ENCODE measurements at regions of chr1 and their contacts with region 1.

Region 1: DNA sequence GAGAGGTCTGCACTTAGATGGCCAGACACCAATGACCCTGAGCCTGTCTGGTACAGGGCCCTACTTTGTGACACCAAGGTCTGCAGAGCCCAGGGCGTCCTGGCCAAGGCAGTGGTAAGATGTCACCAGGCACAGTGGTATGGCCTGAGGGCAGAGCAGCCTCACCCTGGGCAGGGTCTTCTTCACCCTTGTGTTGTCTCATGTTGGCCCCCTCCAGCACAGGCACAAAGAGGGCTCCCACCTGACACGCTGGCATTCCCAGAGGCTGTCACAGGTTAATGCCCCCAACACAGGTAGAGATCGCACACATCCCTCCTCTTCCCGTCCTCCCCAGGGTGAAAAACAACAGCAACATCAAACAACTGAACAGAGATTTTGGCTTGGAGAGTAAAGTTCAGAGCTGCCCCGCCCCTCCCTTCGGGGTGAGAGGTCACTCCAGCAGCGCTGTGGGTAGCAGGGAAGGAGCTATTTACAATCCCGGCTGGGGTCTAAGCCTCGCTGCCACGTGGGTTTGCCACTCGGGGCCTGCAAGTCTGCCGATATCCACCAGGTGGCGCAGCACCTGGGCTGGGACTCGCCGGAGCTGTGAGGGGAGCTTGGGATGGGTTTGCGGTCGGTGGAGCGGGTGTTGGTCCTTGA is 12.6 kb downstream of the EFNA3 start:
- DNase-seq: peak; percentile 84
- ATAC-seq: peak; percentile 80
- H3K4me3 Mint-ChIP-seq: no peak overlapping the region
- H3K27ac Mint-ChIP-seq: no peak overlapping the region
- H3K4me1 Mint-ChIP-seq: peaks cover 7% of the 10 kb centered on the region
- H3K27me3 Mint-ChIP-seq: peaks cover 17% of the 10 kb centered on the region

Region 2: DNA sequence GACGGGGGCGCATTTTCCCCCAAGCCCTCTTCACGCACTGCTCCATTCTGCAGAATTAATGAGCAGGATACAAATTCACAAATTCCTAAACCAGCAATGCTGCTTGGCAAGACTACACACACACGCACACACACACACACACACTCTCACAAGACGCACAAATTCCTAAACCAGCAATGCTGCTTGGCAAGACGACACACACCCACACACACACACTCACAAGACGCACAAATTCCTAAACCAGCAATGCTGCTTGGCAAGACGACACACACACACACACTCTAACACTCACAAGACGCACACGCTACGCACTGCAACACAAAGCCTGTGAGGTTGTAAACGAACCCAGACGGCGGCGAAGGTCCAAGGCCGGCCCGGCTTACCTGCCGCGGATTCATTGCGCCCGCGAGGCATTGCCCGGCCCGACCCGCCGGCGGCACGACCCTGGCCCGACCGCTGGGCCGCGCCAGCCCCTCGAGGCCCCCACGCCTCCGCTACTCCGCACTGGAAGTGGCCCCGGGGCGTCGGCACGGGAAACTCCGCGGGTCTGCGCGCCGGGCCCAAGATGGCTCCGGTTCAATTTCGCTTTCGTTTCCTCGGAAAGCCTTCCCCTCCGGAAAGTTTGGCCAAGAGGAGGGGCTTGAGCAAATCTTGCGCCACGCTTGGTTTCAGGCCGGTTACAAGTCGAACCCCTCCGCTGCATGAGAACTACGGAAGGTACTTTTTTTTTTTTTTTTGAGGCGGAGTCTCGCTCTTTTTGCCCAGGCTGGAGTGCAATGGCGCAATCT is 483.4 kb before region 1 on chr1 and contains the start of gene ADAR:
- CTCF ChIA-PET with region 1: no interaction called
- DNase-seq: peak; percentile 97
- ATAC-seq: peak; percentile 86
- H3K4me3 Mint-ChIP-seq: peak within 1 kb of the TSS; percentile 92
- H3K27ac Mint-ChIP-seq: peak within 1 kb of the TSS; percentile 98
- H3K4me1 Mint-ChIP-seq: peaks cover 73% of the 10 kb centered on the region
- H3K27me3 Mint-ChIP-seq: no peaks in the 10 kb centered on the region
- total RNA-seq, gene ADAR: 369 to 434 TPM

Region 3: GRCh38 chr1:154990276-154990675 is 100.9 kb before region 1 on chr1:
- CTCF ChIA-PET with region 1: no interaction called
- DNase-seq: no peak
- ATAC-seq: no peak
- H3K4me3 Mint-ChIP-seq: no peak overlapping the region
- H3K27ac Mint-ChIP-seq: no peak overlapping the region
- H3K4me1 Mint-ChIP-seq: peaks cover 13% of the 10 kb centered on the region
- H3K27me3 Mint-ChIP-seq: no peaks in the 10 kb centered on the region

Region 4: DNA sequence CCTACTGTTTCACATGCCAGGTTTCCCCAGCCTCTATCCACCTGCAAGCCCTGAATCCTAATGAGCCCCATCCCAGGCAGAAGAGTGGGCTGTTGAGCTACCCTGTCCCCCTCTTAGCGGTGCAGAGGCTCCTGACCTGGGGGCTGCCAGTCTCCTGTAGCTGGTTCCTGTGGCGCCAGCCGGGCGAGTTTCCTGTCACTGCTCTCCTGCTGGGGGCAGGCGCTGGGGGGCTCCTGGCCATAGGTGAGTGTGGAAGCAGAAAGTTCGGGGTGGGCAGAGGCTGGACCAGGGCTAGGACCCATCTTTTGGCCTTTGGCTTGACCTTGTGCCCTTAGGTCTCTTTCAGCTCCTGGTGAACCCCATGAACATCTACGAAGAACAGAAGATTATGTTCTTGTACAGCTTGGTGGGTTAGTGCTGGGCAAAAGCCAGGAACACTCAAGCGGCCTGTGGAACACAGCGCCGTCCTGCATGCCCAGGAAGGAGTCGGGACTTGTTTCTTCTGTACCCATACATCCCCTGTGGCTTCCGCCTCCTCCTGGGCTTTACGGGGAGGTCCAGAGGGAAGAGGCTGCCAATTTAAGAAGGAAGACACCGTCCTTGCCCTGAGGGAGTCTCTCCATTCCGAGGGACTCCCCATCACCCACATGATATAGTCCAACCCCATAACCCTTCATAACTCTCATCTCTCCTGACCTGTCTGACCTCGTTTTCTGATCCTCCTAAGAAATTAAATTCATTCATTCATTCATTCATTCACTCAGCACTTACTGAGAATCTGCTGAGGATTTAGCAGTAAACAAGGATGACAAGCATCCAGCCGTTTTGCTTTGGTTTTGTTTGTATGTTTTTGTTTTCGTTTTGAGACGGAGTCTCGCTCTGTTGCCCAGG is 56.6 kb before region 1 on chr1:
- CTCF ChIA-PET with region 1: no interaction called
- DNase-seq: no peak
- ATAC-seq: no peak
- H3K4me3 Mint-ChIP-seq: no peak overlapping the region
- H3K27ac Mint-ChIP-seq: no peak overlapping the region
- H3K4me1 Mint-ChIP-seq: peaks cover 4% of the 10 kb centered on the region
- H3K27me3 Mint-ChIP-seq: peaks cover 28% of the 10 kb centered on the region

Region 5: GRCh38 chr1:155050560-155051341 is 40.4 kb before region 1 on chr1 and contains the start of gene ADAM15:
- CTCF ChIA-PET with region 1: interaction called, 319 read pairs
- DNase-seq: peak; percentile 83
- ATAC-seq: peak; percentile 90
- H3K4me3 Mint-ChIP-seq: peak within 1 kb of the TSS; percentile 79
- H3K27ac Mint-ChIP-seq: peak within 1 kb of the TSS; percentile 78
- H3K4me1 Mint-ChIP-seq: peaks cover 28% of the 10 kb centered on the region
- H3K27me3 Mint-ChIP-seq: no peaks in the 10 kb centered on the region
- total RNA-seq, gene ADAM15: 41.7 to 47.5 TPM

Region 6: GRCh38 chr1:155063550-155064110 is 27.6 kb before region 1 on chr1 and contains the start of gene EFNA4:
- CTCF ChIA-PET with region 1: interaction called, 319 read pairs
- DNase-seq: peak; percentile 90
- ATAC-seq: peak; percentile 88
- H3K4me3 Mint-ChIP-seq: peak within 1 kb of the TSS; percentile 83
- H3K27ac Mint-ChIP-seq: peak within 1 kb of the TSS; percentile 8
- H3K4me1 Mint-ChIP-seq: peaks cover 26% of the 10 kb centered on the region
- H3K27me3 Mint-ChIP-seq: peaks cover 4% of the 10 kb centered on the region
- total RNA-seq, gene EFNA4: 3.8 to 5.3 TPM

Region 7: GRCh38 chr1:155070721-155071569 is 20.2 kb before region 1 on chr1:
- CTCF ChIA-PET with region 1: interaction called, 319 read pairs
- DNase-seq: peak; percentile 87
- ATAC-seq: peak; percentile 92
- H3K4me3 Mint-ChIP-seq: peak overlapping the region; percentile 42
- H3K27ac Mint-ChIP-seq: peak overlapping the region; percentile 31
- H3K4me1 Mint-ChIP-seq: peaks cover 31% of the 10 kb centered on the region
- H3K27me3 Mint-ChIP-seq: peaks cover 12% of the 10 kb centered on the region

Region 8: GRCh38 chr1:155135415-155136028 is 44.3 kb after region 1 on chr1 and contains the start of gene SLC50A1:
- CTCF ChIA-PET with region 1: interaction called, 32 read pairs
- DNase-seq: peak; percentile 95
- ATAC-seq: peak; percentile 84
- H3K4me3 Mint-ChIP-seq: peak within 1 kb of the TSS; percentile 97
- H3K27ac Mint-ChIP-seq: peak within 1 kb of the TSS; percentile 98
- H3K4me1 Mint-ChIP-seq: peaks cover 37% of the 10 kb centered on the region
- H3K27me3 Mint-ChIP-seq: peaks cover 2% of the 10 kb centered on the region
- total RNA-seq, gene SLC50A1: 39.8 to 41.2 TPM

Region 9: DNA sequence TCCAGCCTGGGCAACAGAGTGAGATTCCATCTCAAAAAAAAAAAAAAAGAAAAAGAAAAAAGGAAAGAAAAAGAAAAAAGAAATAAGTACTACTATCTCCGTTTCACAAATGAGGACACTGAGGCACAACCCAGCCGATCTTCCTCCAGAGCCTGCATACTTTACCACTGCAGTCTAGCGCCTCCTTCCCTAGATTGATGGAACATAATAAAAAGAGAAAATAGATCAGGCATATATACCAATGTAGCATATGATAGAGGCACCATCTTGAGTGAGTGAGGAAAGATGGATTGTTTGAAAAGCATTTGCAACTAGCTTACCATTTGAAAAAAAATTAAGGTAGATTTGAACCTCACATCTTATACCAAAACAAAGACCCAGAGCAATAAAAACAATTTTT is 54.3 kb after region 1 on chr1:
- CTCF ChIA-PET with region 1: interaction called, 13 read pairs
- DNase-seq: no peak
- ATAC-seq: no peak
- H3K4me3 Mint-ChIP-seq: no peak overlapping the region
- H3K27ac Mint-ChIP-seq: no peak overlapping the region
- H3K4me1 Mint-ChIP-seq: peaks cover 2% of the 10 kb centered on the region
- H3K27me3 Mint-ChIP-seq: peaks cover 35% of the 10 kb centered on the region

Region 10: GRCh38 chr1:155167166-155168104 is 76.2 kb after region 1 on chr1:
- CTCF ChIA-PET with region 1: interaction called, 295 read pairs
- DNase-seq: peak; percentile 92
- ATAC-seq: peak; percentile 80
- H3K4me3 Mint-ChIP-seq: peak overlapping the region; percentile 44
- H3K27ac Mint-ChIP-seq: peak overlapping the region; percentile 45
- H3K4me1 Mint-ChIP-seq: peaks cover 25% of the 10 kb centered on the region
- H3K27me3 Mint-ChIP-seq: no peaks in the 10 kb centered on the region

Region 11: DNA sequence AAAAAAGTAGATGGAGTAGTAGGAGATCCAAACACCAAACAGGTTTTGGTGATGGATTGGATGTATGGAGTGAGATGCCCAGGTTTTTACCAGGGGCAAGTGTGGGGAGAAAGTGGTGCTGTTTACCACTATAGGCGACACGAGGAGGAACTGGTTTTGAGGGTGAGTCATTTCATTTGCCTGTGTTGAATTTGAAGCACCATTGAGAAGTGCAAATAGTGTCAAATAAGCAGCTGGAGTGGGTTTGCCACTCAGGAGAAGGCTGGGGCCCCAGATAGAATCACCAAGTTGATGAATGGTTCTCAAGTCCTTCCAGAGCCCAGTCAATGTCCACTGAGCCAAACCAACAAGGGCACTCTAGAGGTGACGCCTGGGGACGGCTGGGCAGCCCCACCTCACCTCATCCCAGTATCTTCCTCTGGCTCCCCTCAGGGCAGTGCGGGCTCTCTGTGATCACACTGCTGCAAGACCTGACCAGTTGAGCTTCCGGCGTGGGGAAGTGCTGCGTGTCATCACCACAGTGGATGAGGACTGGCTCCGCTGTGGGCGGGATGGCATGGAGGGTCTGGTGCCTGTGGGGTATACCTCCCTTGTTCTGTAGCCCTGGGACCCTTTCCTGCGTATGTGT is 238.9 kb after region 1 on chr1:
- CTCF ChIA-PET with region 1: no interaction called
- DNase-seq: no peak
- ATAC-seq: no peak
- H3K4me3 Mint-ChIP-seq: no peak overlapping the region
- H3K27ac Mint-ChIP-seq: peak overlapping the region; percentile 43
- H3K4me1 Mint-ChIP-seq: peaks cover 21% of the 10 kb centered on the region
- H3K27me3 Mint-ChIP-seq: no peaks in the 10 kb centered on the region